Posterior cingulate gyrus (tissue), 11 donors: ENCODE measurements at regions of chr7 and their contacts with region 1.

Region 1: GRCh38 chr7:26200444-26201246 is at the start of gene HNRNPA2B1:
- DNase-seq: peak; percentile 95 to 99 (median 96)

Region 2: GRCh38 chr7:26090927-26091519 is 109.6 kb before region 1 on chr7:
- intact Hi-C with region 1: loop called (anchors 2 kb)
- DNase-seq: peak in 1 of 10 donors; percentile 32

Region 3: DNA sequence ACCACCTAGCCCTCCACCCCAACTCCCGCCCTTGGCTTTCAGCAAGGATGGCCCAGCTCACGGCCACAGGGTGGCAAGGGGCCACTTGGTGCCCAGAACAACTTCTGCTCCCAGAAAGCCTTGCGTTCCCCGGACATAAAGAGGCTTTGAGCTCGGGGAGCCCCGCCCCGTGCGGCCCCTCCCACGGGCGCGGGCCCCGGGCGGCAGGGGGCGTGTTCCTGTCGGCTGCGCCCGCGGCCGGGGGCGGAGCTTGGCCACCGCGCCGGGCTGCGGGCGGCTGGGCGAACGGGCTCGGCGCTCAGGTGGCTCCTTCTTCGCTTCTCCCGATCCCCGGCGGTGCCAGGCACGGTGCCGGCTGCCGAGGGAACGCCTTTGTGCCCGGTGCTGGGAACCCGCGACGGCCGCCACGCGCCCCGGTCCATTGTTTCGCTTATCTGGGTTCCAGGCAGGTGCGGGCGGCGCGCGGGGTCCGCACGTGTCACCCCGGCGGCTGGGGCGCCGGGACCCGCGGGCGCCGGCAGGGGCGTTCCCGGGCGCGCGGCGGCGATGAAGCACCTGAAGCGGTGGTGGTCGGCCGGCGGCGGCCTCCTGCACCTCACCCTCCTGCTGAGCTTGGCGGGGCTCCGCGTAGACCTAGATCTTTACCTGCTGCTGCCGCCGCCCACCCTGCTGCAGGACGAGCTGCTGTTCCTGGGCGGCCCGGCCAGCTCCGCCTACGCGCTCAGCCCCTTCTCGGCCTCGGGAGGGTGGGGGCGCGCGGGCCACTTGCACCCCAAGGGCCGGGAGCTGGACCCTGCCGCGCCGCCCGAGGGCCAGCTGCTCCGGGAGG is 48.5 kb before region 1 on chr7 and contains the start of gene NFE2L3:
- intact Hi-C with region 1: loop called (anchors 5 kb)
- DNase-seq: peak in 9 of 10 donors; percentile 41 to 96 (median 74)

Region 4: GRCh38 chr7:26237035-26237807 is 36.6 kb after region 1 on chr7:
- intact Hi-C with region 1: no loop called
- DNase-seq: peak in 4 of 10 donors; percentile 7 to 80 (median 25)

Region 5: GRCh38 chr7:26291699-26292538 is 91.3 kb after region 1 on chr7 and contains the start of gene SNX10:
- intact Hi-C with region 1: loop called (anchors 2 kb)
- DNase-seq: peak; percentile 22 to 94 (median 52)